Astrocyte of the cerebellum (primary cell): ENCODE measurements at regions of chr6 and their contacts with region 1.

Region 1: GRCh38 chr6:29005183-29005885 is at the start of gene ZNF311:
- DNase-seq: no peak
- H3K4me3 ChIP-seq: peak within 1 kb of the TSS; percentile 53
- CTCF ChIP-seq: no peak

Region 2: DNA sequence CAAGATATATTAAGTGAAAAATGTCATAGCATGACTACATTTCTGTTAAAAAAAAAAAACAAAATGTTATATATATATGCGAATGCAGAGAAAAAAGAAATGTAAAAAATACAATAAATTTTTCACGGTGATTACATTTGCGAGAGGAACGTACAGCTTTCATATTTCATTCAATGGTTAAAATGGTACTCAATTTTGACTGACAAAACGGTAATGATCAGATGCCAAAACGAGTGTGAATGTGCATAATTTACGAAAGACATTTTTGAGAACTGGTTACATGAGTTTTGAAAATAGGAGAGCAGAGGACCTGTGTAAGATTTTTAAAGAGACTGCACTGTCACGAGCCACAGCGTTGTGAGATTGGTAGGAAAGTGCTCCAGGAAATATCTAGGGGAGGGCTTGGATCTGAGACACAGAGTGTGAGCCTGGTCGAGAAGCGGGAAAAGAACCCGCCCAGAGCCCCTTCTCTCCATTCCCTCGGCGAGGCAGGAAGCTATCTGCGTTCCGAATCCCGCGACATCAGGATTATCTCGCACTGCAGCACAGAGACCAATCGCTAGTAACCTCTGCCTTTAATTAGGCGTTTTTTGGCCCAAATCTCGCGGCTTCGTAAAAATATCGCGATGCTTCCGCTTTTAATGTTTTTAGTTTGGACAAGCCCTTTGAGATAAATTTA is 110.1 kb before region 1 on chr6:
- in situ Hi-C with region 1: loop called (anchors 10 kb)
- DNase-seq: peak; percentile 94
- H3K4me3 ChIP-seq: peak overlapping the region; percentile 74
- CTCF ChIP-seq: no peak

Region 3: GRCh38 chr6:28929887-28930620 is 75.3 kb before region 1 on chr6:
- in situ Hi-C with region 1: loop called (anchors 10 kb)
- DNase-seq: no peak
- H3K4me3 ChIP-seq: no peak overlapping the region
- CTCF ChIP-seq: no peak